PC-9 (cell line): ENCODE measurements at regions of chr17 and their contacts with region 1.

Region 1: DNA sequence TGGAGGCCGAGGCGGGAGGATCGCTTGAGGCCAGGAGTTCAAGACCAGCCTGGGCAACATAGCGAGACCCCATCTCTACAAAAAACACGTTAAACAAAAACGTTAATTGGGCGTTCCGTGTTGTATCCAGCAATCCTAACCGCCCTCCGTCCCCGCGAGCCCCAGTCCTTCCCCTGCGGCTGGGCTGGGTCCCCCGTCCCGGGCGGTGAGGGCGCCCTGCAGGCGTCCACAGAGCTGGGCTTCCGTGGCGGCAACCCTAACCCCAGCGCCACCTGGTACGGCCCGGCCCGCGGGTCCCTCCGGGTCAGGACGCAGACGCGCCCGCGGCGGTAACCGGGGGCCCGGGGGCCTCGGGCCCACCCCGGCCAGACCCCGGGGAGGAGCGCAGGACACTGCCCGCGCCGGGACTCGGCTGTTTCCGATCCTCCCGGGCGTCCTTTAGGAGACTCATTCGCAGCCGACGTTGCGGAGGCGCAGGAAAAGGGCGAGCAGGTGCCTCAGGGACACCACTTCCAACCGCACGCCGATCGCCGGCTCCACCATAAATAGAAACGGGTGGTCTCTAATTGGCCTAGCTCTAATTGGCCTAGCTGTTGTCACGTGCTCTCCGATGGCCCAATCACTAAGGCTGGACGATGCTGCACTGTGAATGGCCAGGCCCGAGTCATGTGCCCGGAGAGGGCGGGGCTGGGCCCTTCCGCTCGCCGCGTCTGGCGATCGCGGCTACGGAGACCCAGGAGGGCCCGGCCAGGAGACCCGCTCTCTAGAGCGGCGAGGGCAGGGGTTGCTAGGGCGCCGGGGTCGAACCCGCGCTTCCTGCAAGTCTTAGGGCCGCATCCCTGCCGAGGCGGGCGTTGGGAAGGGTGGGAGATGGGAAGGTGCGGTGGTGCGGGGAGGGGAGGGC is 19.0 kb upstream of the CSNK1D start:
- DNase-seq: peak; percentile 91 to 93
- H3K4me3 ChIP-seq: peak overlapping the region; percentile 64
- H3K27ac ChIP-seq: peak overlapping the region; percentile 64
- H3K4me1 ChIP-seq: peaks cover 32% of the 10 kb centered on the region
- H3K27me3 ChIP-seq: no peaks in the 10 kb centered on the region
- CTCF ChIP-seq: no peak

Region 2: DNA sequence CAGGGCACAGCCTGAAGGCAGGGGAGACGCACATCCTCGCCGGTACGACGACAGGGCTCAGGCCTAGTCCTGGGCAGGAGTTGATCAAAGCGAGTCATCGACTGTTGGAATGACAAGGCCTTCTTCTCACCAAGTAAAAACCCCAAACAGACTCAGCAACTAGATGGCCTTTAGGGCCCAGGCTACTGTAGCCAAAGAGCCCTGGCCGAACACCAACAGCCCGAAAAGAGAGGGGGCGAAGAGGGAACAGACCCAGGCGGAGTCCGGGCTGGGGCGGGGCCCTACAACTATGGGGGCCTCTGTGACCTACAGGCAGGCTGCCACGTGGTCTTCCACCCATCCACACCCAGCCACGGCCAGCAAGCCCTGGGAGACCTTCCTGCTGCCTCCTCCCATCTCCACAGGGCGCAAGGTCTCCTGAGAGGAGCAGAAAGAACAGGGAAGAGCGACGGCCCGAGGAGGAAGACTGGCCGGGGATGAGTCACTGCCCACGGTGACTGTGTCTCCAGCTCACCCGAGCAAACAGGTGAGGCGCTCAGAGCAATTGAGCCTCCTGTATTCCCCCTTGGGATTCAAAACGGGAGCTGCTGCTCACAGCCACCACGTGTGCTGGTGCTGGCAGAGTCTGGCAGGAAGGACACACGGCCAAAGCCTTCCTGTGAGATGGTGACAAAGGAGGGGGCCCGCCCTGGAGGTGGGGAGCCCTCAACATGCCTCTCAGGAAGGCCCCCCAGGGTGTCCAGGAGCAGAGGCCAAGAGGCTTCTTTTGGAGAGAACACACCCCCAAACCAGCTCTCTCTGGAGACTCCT is 45.9 kb before region 1 on chr17:
- CTCF ChIA-PET with region 1: interaction called, 3 read pairs
- POLR2A ChIA-PET with region 1: interaction called, 3 read pairs
- intact Hi-C with region 1: loop called (anchors 2 kb)
- DNase-seq: peak; percentile 80
- H3K4me3 ChIP-seq: no peak overlapping the region
- H3K27ac ChIP-seq: peak overlapping the region; percentile 75
- H3K4me1 ChIP-seq: peaks cover 26% of the 10 kb centered on the region
- H3K27me3 ChIP-seq: no peaks in the 10 kb centered on the region
- CTCF ChIP-seq: no peak

Region 3: DNA sequence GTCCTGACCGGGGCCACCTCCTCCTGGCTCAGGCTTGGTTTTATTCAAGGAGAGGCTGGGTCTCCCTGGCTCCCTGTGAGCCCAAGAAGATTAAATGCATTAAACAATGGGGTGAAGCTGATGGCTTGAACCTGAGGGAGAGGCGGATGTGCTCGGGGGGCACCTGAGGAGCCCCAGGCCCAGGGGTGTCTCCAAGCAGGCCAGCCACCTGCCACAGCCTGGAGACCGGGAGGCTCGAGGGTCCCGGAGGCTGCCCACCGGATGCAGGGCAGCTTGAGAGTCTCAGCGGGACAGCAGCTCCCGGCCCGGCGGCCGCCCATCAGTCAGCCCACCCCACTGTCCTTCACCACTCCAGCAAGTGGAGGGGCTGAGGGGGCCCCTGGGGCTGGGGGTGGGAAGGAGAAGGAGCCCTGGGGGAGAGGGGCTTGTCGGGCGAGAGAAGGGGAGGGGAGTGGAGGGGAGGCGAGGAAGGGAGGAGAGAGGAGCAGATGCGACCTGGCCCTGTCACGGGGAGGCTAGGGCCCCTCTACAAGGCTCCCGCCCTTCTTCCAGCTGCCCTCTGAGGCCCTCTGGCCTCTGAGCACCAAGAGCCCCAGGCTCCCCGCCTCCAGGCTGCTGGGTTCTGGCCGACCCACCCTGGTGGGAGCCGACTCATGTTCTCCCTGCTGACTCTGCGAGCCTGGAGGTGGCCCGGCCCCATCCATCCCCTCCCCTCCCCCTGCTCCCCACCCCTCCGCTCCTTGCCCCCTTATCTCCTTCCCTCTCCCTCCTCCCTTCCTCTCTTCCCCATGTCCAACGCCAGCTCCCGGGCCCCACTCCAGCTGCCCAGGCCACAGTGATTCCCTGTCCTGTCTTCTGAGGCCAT is 11.7 kb after region 1 on chr17:
- CTCF ChIA-PET with region 1: no interaction called
- POLR2A ChIA-PET with region 1: interaction called, 10 read pairs
- intact Hi-C with region 1: no loop called
- DNase-seq: no peak
- H3K4me3 ChIP-seq: no peak overlapping the region
- H3K27ac ChIP-seq: no peak overlapping the region
- H3K4me1 ChIP-seq: no peaks in the 10 kb centered on the region
- H3K27me3 ChIP-seq: peaks cover 4% of the 10 kb centered on the region; the same call in 1 of the 2 replicates
- CTCF ChIP-seq: no peak